ENCODE measurements at regions of chr6 and their contacts with region 1.

Region 1: GRCh38 chr6:111873178-111874024 is at the start of gene FYN:
- DNase-seq: peak; percentile 95 to 99 (median 98)
- ATAC-seq: peak; percentile 88 to 94 (median 92)
- H3K4me3 ChIP-seq: peak within 1 kb of the TSS; percentile 77 to 93
- H3K4me3 Mint-ChIP-seq: peak within 1 kb of the TSS; percentile 96 to 99 (median 98)
- H3K27ac ChIP-seq: peak within 1 kb of the TSS; percentile 80
- H3K27ac Mint-ChIP-seq: peak within 1 kb of the TSS; percentile 95 to 96
- H3K4me1 ChIP-seq: peaks cover 21 to 33% of the 10 kb centered on the region in 2 experiments
- H3K4me1 Mint-ChIP-seq: peaks cover 41 to 49% (median 45%) of the 10 kb centered on the region in 3 donors
- H3K27me3 ChIP-seq: no peaks in the 10 kb centered on the region
- H3K27me3 Mint-ChIP-seq: no peaks in the 10 kb centered on the region
- total RNA-seq, gene FYN: 466 to 573 (median 534) TPM

Region 2: GRCh38 chr6:111841822-111842221 is 31.6 kb before region 1 on chr6:
- CTCF ChIA-PET with region 1: interaction called in 1 of 2 experiments, 13 read pairs
- POLR2A ChIA-PET with region 1: interaction called in 1 of 2 experiments, 11 read pairs
- DNase-seq: peak in 26 of 35 experiments; percentile 19 to 62 (median 42)
- ATAC-seq: peak in 2 of 4 experiments; percentile 17 to 18
- H3K4me3 ChIP-seq: peak overlapping the region in 1 of 2 donors; percentile 26
- H3K4me3 Mint-ChIP-seq: no peak overlapping the region
- H3K27ac ChIP-seq: peak overlapping the region; percentile 75
- H3K27ac Mint-ChIP-seq: no peak overlapping the region
- H3K4me1 ChIP-seq: peaks cover 91 to 92% of the 10 kb centered on the region in 2 experiments
- H3K4me1 Mint-ChIP-seq: no peaks in the 10 kb centered on the region
- H3K27me3 ChIP-seq: no peaks in the 10 kb centered on the region
- H3K27me3 Mint-ChIP-seq: no peaks in the 10 kb centered on the region

Region 3: DNA sequence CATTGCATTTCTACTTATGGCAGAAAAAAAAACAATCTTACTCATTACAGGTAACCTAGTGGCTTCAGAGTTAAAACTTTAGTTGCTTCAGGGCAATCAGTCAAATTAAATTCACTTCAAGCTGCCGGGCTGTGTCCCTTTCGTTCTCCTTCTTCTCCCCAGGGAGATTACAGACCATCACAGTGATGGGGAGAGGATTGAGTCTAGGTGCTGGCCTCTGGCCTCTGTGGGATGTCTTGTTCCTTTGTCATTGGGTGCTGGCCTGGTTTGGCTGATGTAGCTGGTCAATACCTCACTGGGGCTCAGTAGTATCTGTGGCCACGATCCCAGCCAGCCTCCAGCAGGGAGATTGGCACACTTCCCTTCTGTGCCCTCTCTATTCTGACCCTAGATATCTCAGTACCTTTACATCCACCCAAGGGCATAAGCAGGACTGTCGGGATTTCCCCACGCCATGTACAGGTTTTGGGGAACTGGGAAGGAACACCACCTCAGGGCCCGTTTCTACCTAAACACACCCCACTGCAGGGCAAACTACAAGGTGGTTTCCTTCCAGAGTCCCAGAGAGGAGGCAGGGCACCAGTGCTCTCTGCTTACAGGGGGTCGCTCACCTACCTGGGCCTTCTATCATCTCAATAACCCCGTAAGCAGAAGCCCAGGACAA is 15.6 kb before region 1 on chr6:
- CTCF ChIA-PET with region 1: interaction called in 1 of 2 experiments, 4 read pairs
- POLR2A ChIA-PET with region 1: interaction called, 7 to 11 read pairs
- DNase-seq: no peak
- ATAC-seq: peak; percentile 22 to 36 (median 34)
- H3K4me3 ChIP-seq: peak overlapping the region in 1 of 2 donors; percentile 32
- H3K4me3 Mint-ChIP-seq: peak overlapping the region; percentile 5 to 99 (median 50)
- H3K27ac ChIP-seq: peak overlapping the region; percentile 48
- H3K27ac Mint-ChIP-seq: peak overlapping the region; percentile 82 to 91
- H3K4me1 ChIP-seq: peaks cover 63 to 86% of the 10 kb centered on the region in 2 experiments
- H3K4me1 Mint-ChIP-seq: peaks cover 97 to 100% (median 97%) of the 10 kb centered on the region in 3 donors
- H3K27me3 ChIP-seq: no peaks in the 10 kb centered on the region
- H3K27me3 Mint-ChIP-seq: no peaks in the 10 kb centered on the region